ENCODE measurements at regions of chr7 and their contacts with region 1.

Region 1: DNA sequence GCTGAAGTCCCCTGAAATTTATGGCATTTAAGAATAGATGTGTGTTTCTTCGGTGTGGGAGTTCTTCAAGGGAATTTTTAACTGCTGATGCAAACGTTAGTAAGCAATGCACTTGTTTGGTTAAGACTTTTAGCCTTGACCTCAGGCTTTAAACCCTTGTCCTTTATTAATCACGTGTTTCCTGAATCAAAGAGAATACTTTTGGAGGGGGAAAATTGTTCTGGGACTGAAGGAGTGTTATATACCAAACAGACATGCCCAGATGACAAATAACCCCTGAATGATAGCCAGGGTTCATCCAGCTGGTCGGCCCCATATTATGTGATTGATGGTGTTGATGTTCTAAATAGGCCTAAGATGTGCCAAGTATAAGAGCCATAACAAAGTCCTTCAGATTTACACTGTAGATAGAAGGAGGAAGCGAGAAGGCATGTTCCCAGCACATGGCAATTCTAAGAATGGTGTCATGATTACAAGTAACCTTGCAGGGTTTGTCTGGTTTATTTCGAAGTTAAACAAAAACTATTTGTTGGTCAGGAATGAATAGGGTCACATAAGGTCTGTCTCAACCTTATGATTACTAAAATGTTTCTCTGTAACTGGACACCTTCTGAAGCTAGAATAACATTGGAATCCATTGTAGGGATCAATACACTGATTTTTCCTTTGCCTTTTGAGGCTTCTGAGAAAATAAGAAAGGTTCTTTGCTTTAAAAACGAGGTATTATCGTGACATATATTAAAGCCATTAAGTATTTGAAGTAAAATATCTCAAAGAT is 124.2 kb upstream of the SEM1 start:
- DNase-seq: no peak
- H3K4me3 ChIP-seq: no peak overlapping the region
- H3K27ac ChIP-seq: no peak overlapping the region
- H3K4me1 ChIP-seq: no peaks in the 10 kb centered on the region
- H3K27me3 ChIP-seq: no peaks in the 10 kb centered on the region
- CTCF ChIP-seq: no peak

Region 2: GRCh38 chr7:96770758-96771157 is 63.1 kb before region 1 on chr7:
- intact Hi-C with region 1: loop called (anchors 5 kb)
- DNase-seq: no peak
- H3K4me3 ChIP-seq: no peak overlapping the region
- H3K27ac ChIP-seq: no peak overlapping the region
- H3K4me1 ChIP-seq: no peaks in the 10 kb centered on the region
- H3K27me3 ChIP-seq: no peaks in the 10 kb centered on the region
- CTCF ChIP-seq: no peak